Activated CD4-positive, alpha-beta memory T cell treated with anti-CD3 and anti-CD28 coated beads for 36 hours (primary cell): ENCODE measurements at regions of chr14 and their contacts with region 1.

Region 1: DNA sequence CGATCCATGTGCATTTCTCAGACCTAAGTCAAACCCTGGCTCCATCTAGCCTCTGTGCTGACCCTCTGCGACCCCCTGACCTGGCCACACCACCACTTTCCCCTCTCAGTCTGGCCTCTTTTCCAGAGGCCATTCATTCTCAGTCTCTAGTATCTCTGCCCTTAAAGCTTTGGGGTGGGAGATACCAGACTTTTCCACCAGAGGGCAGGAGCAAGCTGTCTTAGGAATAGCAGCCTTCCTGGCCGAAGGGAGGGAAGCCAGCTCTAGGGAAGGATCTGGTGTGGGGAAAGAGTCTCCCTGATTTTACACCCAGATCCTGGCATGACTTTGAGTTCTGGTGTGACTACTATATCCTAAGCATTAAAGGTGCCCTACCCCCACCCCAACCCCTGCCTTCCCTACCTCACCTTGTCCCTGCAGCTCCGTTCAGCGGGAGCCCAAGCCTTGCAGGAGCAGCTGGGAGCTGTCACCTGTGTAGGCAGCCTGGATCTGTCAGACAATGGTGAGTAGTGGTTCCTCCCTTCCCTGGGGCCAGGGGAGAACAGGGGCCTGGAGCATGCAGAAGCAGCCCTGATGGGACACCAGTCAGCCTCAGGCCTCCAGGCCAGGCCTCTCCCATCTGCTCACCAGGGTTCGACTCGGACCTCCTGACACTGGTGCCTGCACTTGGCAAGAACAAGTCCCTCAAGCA is 6.6 kb downstream of the CARMIL3 start:
- DNase-seq: peak; percentile 83
- H3K4me3 Mint-ChIP-seq: no peak overlapping the region
- H3K27ac Mint-ChIP-seq: peak overlapping the region; percentile 4
- H3K4me1 Mint-ChIP-seq: peaks cover 7% of the 10 kb centered on the region
- H3K27me3 Mint-ChIP-seq: peaks cover 4% of the 10 kb centered on the region

Region 2: GRCh38 chr14:24013654-24014514 is 44.5 kb before region 1 on chr14:
- CTCF ChIA-PET with region 1: interaction called, 3 read pairs
- POLR2A ChIA-PET with region 1: no interaction called
- intact Hi-C with region 1: loop called (anchors 2 kb)
- DNase-seq: peak; percentile 53
- H3K4me3 Mint-ChIP-seq: no peak overlapping the region
- H3K27ac Mint-ChIP-seq: no peak overlapping the region
- H3K4me1 Mint-ChIP-seq: peaks cover 24% of the 10 kb centered on the region
- H3K27me3 Mint-ChIP-seq: peaks cover 6% of the 10 kb centered on the region

Region 3: DNA sequence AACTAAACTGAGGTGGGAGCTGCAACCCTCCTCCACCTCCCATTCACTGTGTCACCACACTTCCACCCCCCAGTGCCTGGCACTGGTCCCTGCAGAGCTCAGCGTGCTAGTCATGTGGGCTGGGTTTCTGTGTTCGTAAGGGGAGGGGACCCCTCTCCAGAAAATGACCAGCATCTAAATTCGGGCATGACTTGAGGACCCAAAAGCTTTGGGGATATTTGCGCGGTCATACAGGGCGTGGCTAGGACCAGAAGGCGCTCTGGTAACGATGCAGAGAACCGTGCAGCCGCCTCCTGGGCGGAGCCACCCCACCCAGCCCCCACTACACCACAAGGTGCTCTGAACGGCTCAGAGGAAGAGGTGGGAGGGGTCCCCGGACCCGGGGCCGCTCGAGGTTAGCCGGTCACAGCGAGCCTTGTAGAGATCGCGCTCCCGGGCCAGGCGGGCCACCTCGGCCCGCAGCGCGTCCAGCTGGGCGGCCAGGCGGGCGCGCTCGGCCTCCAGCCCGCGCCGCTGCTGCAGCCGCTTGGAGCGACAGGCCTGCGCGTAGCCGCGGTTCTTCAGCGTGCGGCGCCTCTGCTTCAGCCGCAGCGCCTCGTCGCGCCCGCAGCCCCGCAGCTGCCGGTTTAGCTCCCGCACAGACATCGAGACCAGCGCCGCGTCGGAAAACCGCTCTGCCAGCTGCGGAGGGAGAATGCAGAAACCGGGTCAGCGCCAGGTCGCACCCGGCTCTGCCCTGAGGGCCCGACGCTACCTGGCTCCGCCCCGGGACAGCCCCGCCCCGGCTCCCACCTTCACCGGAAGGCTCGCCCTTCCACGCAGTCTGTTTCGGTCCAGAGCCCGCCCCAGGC is 22.7 kb after region 1 on chr14:
- CTCF ChIA-PET with region 1: interaction called, 50 read pairs
- POLR2A ChIA-PET with region 1: interaction called, 8 read pairs
- intact Hi-C with region 1: no loop called
- DNase-seq: peak; percentile 85
- H3K4me3 Mint-ChIP-seq: peak overlapping the region; percentile 72
- H3K27ac Mint-ChIP-seq: peak overlapping the region; percentile 49
- H3K4me1 Mint-ChIP-seq: peaks cover 16% of the 10 kb centered on the region
- H3K27me3 Mint-ChIP-seq: no peaks in the 10 kb centered on the region

Region 4: GRCh38 chr14:24108336-24108874 is 50.0 kb after region 1 on chr14:
- CTCF ChIA-PET with region 1: interaction called, 261 read pairs
- POLR2A ChIA-PET with region 1: interaction called, 18 read pairs
- intact Hi-C with region 1: loop called (anchors 1 kb)
- DNase-seq: no peak
- H3K4me3 Mint-ChIP-seq: peak overlapping the region; percentile 11
- H3K27ac Mint-ChIP-seq: peak overlapping the region; percentile 91
- H3K4me1 Mint-ChIP-seq: peaks cover 22% of the 10 kb centered on the region
- H3K27me3 Mint-ChIP-seq: no peaks in the 10 kb centered on the region

Region 5: DNA sequence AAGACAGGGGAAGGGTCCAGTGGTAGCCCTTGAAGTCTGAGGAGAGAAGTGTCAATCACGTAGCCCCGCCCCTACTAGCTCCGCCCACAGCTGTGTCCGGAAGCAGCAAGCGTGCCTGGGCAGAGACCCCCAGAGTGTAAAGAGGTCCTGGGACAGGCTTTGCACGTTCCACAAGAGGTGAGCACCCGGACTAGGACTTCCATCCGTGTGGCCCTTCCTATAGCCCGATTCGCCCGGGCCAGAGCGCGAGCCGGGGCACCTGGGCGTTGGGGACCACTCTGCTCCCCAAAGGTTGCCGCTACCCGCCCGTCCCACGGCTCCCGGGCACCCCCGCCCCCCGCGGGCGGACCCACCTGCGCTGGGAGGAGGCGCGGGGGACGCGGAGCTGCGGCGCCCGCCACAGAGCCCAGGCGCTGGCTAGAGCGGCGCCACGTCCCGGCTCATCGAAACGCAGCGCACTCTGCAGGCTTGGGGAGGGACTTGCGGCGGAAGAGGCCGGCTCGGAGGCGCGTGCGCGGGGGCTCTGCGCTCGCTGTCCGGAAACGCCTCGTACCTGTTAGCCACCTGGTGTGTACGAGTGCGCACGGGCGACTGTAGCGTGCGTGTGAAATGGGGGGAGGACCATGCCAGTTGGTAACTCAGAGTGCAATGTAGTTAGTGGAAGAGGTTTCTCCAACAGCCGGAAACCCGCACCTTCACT is 212.9 kb after region 1 on chr14 and contains the start of gene RABGGTA:
- CTCF ChIA-PET with region 1: no interaction called
- POLR2A ChIA-PET with region 1: no interaction called
- intact Hi-C with region 1: loop called (anchors 10 kb)
- DNase-seq: peak; percentile 93
- H3K4me3 Mint-ChIP-seq: peak within 1 kb of the TSS; percentile 84
- H3K27ac Mint-ChIP-seq: peak within 1 kb of the TSS; percentile 94
- H3K4me1 Mint-ChIP-seq: peaks cover 42% of the 10 kb centered on the region
- H3K27me3 Mint-ChIP-seq: no peaks in the 10 kb centered on the region
- total RNA-seq, gene RABGGTA: 39.5 to 40.6 TPM